ENCODE measurements at regions of chr5 and their contacts with region 1.

Region 1: DNA sequence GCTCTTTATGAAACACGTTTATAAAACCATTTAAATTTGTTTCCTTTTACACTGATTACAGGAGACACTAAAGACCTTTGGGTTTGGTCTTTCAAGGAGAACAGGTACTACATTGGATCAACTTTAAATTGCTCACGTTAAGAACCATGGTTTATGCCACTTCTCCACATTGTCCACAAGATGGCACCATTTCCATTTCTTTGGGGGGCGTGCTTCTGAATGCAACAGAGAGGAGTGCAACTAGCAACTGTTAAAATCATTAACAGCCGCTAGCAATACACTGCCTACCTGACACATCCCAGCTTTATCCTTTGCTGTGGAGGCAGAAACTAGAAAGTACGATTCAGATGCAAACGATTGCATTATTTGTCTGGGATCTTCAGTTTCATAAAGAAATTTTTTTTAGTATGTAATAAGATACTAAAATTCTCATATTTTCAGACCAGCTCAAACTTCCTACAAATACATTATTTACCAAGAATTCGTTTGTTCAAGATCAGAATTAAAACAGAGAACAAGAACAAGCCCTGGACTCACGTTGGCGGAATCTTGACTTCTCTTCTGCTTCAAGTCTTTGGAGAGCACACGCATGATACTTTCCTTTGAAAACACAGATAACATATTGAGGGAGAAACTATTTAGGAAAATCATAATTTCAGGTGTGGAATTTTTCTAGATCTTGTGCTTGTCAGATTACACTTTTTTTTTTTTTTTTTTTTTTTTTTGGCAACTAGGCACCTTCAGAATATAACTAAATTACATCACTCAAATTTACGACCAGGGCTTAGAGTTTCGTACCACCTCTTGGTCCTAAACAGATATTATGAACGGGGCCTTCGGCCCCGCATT is 702 bp downstream of the CDC20B start:
- DNase-seq: peak; percentile 90
- H3K4me3 ChIP-seq: peak overlapping the region; percentile 51 to 64 (median 57)
- H3K27ac ChIP-seq: no peak overlapping the region
- H3K4me1 ChIP-seq: peaks cover 26 to 35% (median 32%) of the 10 kb centered on the region in 4 donors
- H3K27me3 ChIP-seq: peaks cover 8 to 77% (median 31%) of the 10 kb centered on the region in 4 donors
- CTCF ChIP-seq: peak; percentile 73 to 86 (median 83)
- EP300 ChIP-seq: no peak
- POLR2A ChIP-seq: no peak

Region 2: GRCh38 chr5:55072666-55073065 is 99.6 kb before region 1 on chr5:
- intact Hi-C with region 1: no loop called
- DNase-seq: no peak
- H3K4me3 ChIP-seq: no peak overlapping the region
- H3K27ac ChIP-seq: no peak overlapping the region
- H3K4me1 ChIP-seq: no peaks in the 10 kb centered on the region
- H3K27me3 ChIP-seq: peaks cover 0 to 4% (median 0%) of the 10 kb centered on the region in 4 donors
- CTCF ChIP-seq: no peak
- EP300 ChIP-seq: no peak
- POLR2A ChIP-seq: no peak

Region 3: GRCh38 chr5:55232985-55233928 is 61.0 kb after region 1 on chr5 and contains the start of gene CCNO:
- intact Hi-C with region 1: loop called (anchors 2 kb)
- DNase-seq: peak; percentile 91
- H3K4me3 ChIP-seq: peak within 1 kb of the TSS; percentile 57 to 65 (median 60)
- H3K27ac ChIP-seq: peak within 1 kb of the TSS in 1 of 4 donors; percentile 3
- H3K4me1 ChIP-seq: peaks cover 36 to 42% (median 40%) of the 10 kb centered on the region in 4 donors
- H3K27me3 ChIP-seq: peaks cover 12 to 89% (median 51%) of the 10 kb centered on the region in 4 donors
- CTCF ChIP-seq: peak in 1 of 3 experiments; percentile 12
- EP300 ChIP-seq: no peak
- POLR2A ChIP-seq: no peak
- total RNA-seq, gene CCNO: 0.19 TPM in 1 of 4 donors, not detected in the others

Region 4: DNA sequence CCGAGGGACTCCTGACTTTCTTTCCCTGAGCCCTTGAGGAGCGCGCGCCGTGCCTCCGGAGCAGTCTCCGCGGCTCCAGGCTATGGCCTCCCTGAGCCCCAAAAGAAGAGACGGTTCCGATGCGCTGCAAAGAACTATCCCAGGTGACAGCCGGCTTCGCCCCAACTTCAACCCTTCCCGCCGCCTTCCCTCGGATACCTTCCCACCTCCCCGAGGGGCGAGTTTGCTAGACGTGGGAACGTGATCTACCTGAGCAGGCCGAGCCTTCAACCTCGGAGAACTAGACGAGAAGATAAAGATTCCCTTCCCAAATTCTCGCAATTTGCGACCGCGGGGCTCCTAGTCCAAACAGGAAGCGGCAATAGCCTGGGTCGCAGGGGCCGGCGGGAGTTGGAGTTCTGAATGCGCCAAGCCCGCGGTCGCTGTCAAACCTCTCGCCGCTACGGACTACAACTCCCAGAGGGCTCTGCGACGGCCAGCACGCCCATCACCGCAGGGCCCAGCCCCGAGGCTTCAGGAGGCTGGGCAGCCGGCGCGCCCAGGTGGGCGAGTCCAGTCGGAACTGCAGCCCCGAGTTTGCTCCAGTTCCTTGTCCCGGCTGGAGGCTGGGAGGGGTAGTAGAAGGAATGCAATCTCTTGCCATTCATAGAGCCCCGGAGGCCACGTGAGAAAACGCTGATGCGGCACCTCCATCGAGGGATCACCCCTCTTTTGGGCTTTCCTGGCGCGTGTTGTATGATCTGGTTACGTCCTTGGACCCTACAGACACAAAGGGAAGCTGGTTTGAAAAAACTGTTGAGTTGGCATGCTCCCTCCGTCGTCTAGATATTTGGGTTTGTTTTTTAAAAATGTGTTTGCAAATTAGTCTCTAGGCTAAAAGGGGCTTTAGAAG is 539.9 kb after region 1 on chr5 and contains the start of gene SLC38A9:
- intact Hi-C with region 1: loop called (anchors 10 kb)
- DNase-seq: peak; percentile 98
- H3K4me3 ChIP-seq: peak within 1 kb of the TSS; percentile 76 to 90 (median 79)
- H3K27ac ChIP-seq: peak within 1 kb of the TSS; percentile 70 to 83 (median 76)
- H3K4me1 ChIP-seq: peaks cover 7 to 21% (median 17%) of the 10 kb centered on the region in 4 donors
- H3K27me3 ChIP-seq: no peaks in the 10 kb centered on the region
- CTCF ChIP-seq: peak in 1 of 3 experiments; percentile 18
- EP300 ChIP-seq: no peak
- POLR2A ChIP-seq: no peak
- total RNA-seq, gene SLC38A9: 10.0 to 12.3 (median 11.0) TPM

Measured in esophagus muscularis mucosa (tissue), 4 donors.